ENCODE measurements at regions of chr1 and their contacts with region 1.

Region 1: DNA sequence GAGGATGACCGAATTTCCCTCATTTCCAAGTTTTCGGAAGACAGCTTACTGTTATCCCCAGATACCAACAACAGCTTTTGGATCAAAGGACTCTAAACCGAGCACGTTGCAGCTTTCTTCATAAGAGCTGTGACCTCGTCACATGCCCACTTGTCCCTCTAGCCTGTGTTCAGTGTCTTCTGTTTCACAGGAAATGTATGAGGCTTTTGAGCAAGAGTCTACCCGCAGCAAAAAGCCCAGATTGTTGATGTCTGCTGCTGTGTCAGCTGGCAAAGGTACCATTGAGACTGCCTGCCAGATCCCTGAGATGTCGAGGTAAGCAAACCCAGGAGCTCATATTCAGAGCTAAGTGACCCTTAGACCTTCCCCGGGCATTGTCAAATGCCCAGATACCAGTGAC is 24.1 kb downstream of the CHI3L2 start:
- DNase-seq: no peak
- H3K4me3 ChIP-seq: no peak overlapping the region
- H3K27ac ChIP-seq: no peak overlapping the region
- H3K4me1 ChIP-seq: no peaks in the 10 kb centered on the region
- H3K27me3 ChIP-seq: no peaks in the 10 kb centered on the region
- CTCF ChIP-seq: no peak
- POLR2A ChIP-seq: no peak

Region 2: GRCh38 chr1:111030590-111030989 is 221.0 kb before region 1 on chr1:
- intact Hi-C with region 1: no loop called
- DNase-seq: peak; percentile 24 to 57 (median 42)
- H3K4me3 ChIP-seq: no peak overlapping the region
- H3K27ac ChIP-seq: no peak overlapping the region
- H3K4me1 ChIP-seq: no peaks in the 10 kb centered on the region
- H3K27me3 ChIP-seq: no peaks in the 10 kb centered on the region
- CTCF ChIP-seq: peak; percentile 48 to 68 (median 52)
- POLR2A ChIP-seq: no peak

Region 3: GRCh38 chr1:111334169-111334568 is 82.6 kb after region 1 on chr1:
- intact Hi-C with region 1: loop called in 1 of 2 experiments (anchors 10 kb)
- DNase-seq: peak in 5 of 7 donors; percentile 16 to 46 (median 35)
- H3K4me3 ChIP-seq: no peak overlapping the region
- H3K27ac ChIP-seq: no peak overlapping the region
- H3K4me1 ChIP-seq: no peaks in the 10 kb centered on the region
- H3K27me3 ChIP-seq: no peaks in the 10 kb centered on the region
- CTCF ChIP-seq: peak; percentile 30 to 60 (median 38)
- POLR2A ChIP-seq: no peak

Measured in adrenal gland (tissue), 19 donors.